HAP-1 (cell line): ENCODE measurements at regions of chr14 and their contacts with region 1.

Region 1: DNA sequence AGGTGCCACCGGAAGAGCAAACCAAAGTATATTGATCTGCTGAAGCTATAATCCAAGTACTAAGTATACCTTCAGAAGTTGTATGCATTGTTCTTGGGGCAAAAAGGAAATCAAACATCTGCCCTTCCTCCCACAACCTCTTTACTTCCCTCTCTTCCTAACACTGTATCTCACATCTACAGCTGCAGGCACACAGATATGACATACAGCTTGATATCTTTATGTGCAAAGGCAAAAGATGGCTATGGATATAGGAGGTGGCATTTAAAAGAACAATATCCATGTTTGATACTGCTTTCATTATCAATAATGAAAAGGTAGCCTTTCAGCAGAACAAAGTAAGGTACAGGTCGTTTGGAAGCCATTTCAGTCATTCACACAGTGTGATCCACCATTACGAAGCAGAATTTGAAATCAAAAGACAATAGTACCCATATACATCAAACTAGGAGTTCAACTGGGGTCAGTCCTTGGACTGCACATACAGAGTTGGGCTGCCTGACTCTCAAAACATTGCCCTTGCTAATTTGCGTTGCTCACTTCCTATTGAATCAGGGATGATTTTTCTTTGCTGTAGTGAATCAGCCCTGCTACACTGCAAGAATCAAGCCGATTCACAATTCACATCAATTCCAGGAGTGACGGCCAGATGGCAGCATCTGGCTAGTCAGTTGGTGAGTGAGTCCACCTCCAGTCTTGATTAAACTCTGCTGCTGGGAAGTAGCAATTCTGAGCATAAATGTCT is 8.9 kb downstream of the ANG start:
- DNase-seq: peak; percentile 48 to 67
- H3K4me3 ChIP-seq: no peak overlapping the region
- H3K4me1 ChIP-seq: no peaks in the 10 kb centered on the region
- H3K27me3 ChIP-seq: peaks cover 3% of the 10 kb centered on the region; the same call in 1 of the 2 replicates

Region 2: GRCh38 chr14:20855652-20856291 is 158.3 kb after region 1 on chr14:
- in situ Hi-C with region 1: loop called (anchors 5 kb)
- DNase-seq: peak; percentile 40 to 56
- H3K4me3 ChIP-seq: no peak overlapping the region
- H3K4me1 ChIP-seq: no peaks in the 10 kb centered on the region
- H3K27me3 ChIP-seq: peaks cover 29% of the 10 kb centered on the region

Region 3: DNA sequence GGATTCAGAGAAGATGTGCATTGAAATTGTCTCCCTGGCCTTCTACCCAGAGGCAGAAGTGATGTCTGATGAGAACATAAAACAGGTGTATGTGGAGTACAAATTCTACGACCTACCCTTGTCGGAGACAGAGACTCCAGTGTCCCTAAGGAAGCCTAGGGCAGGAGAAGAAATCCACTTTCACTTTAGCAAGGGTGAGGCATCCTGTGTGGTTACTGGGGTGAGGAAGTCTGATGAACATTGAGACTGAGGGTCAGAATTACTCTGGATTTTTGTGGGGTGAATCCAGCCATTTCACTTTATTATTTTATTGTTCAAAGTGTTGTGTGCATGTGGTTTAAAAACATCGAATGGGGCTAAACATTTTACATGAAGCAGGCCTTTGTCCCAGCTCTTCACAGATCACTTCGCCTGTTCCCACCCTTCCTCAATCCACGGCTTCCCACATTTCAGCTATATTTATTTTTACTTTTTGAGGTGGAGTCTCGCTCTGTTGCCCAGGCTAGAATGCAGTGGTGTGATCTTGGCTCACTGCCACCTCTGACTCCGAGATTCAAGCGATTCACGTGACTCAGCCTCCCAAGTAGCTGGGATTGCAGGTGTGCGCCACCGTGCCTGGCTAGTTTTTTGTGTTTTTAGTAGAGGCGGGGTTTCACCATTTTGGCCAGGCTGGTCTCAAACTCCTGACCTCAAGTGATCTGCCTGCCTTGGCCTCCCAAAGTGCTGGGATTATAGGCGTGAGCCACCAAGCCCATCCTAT is 645.8 kb after region 1 on chr14:
- in situ Hi-C with region 1: no loop called
- DNase-seq: no peak
- H3K4me3 ChIP-seq: no peak overlapping the region
- H3K4me1 ChIP-seq: peaks cover 12% of the 10 kb centered on the region
- H3K27me3 ChIP-seq: no peaks in the 10 kb centered on the region